Ovary (tissue), 10 donors: ENCODE measurements at regions of chr19 and their contacts with region 1.

Region 1: GRCh38 chr19:43651758-43652545 is 12.3 kb upstream of the CADM4 start:
- DNase-seq: peak; percentile 48 to 64 (median 62)
- H3K4me3 ChIP-seq: no peak overlapping the region
- H3K27ac ChIP-seq: no peak overlapping the region
- H3K4me1 ChIP-seq: no peaks in the 10 kb centered on the region
- H3K27me3 ChIP-seq: no peaks in the 10 kb centered on the region
- CTCF ChIP-seq: peak; percentile 39 to 62 (median 54)
- EP300 ChIP-seq: no peak
- POLR2A ChIP-seq: no peak

Region 2: GRCh38 chr19:43446746-43447489 is 205.0 kb before region 1 on chr19:
- intact Hi-C with region 1: loop called in 1 of 4 experiments (anchors 10 kb)
- DNase-seq: peak; percentile 69 to 85 (median 82)
- H3K4me3 ChIP-seq: no peak overlapping the region
- H3K27ac ChIP-seq: no peak overlapping the region
- H3K4me1 ChIP-seq: no peaks in the 10 kb centered on the region
- H3K27me3 ChIP-seq: no peaks in the 10 kb centered on the region
- CTCF ChIP-seq: peak; percentile 70 to 94 (median 91)
- EP300 ChIP-seq: no peak
- POLR2A ChIP-seq: no peak

Region 3: GRCh38 chr19:43555185-43555770 is 96.7 kb before region 1 on chr19:
- intact Hi-C with region 1: loop called in 1 of 4 experiments (anchors 10 kb)
- DNase-seq: peak; percentile 29 to 64 (median 54)
- H3K4me3 ChIP-seq: no peak overlapping the region
- H3K27ac ChIP-seq: no peak overlapping the region
- H3K4me1 ChIP-seq: no peaks in the 10 kb centered on the region
- H3K27me3 ChIP-seq: no peaks in the 10 kb centered on the region
- CTCF ChIP-seq: no peak
- EP300 ChIP-seq: no peak
- POLR2A ChIP-seq: no peak

Region 4: GRCh38 chr19:43606569-43607229 is 45.3 kb before region 1 on chr19:
- intact Hi-C with region 1: loop called in 1 of 4 experiments (anchors 10 kb)
- DNase-seq: no peak
- H3K4me3 ChIP-seq: no peak overlapping the region
- H3K27ac ChIP-seq: no peak overlapping the region
- H3K4me1 ChIP-seq: no peaks in the 10 kb centered on the region
- H3K27me3 ChIP-seq: no peaks in the 10 kb centered on the region
- CTCF ChIP-seq: no peak
- EP300 ChIP-seq: no peak
- POLR2A ChIP-seq: no peak